ENCODE measurements at regions of chr20 and their contacts with region 1.

Region 1: DNA sequence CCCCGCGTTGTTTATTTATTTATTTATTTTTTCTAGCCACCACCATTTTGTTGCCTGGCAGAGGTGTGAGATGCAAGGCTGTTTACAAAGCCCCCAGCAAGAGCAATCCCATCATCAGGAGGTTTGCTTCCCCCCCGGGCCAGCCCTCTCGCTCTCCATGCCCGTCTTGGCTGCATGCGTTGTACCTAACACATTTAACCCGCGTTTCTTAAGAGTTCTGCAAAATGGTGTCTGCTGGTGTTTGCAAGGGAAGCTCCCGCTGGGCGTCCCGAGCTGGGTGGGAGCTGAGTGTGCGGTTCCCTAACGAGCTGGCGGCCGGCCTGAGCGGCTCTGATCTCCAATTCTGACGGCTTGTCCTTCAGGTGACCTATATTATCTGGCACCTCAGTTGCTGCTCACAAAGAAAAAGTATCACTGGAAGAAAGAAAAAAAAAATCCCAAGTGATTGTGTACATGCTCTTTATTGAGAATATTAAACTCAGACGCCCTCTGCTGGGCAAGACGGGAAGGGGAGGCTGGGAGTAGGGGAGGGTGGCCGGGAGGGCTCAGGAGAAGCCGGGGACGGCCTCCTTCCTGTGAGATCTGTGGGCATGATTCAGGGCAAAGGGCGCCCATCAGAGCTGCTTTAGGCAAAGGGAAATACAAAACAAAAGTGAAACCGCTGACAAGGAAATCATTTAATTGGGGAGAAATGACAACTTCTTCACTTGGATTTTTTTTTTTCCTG is 154.8 kb downstream of the BCAS1 start:
- DNase-seq: peak; percentile 92
- H3K4me3 ChIP-seq: peak overlapping the region; percentile 37 to 47
- H3K27ac ChIP-seq: peak overlapping the region; percentile 77 to 79
- H3K4me1 ChIP-seq: peaks cover 10% of the 10 kb centered on the region
- H3K27me3 ChIP-seq: no peaks in the 10 kb centered on the region
- CTCF ChIP-seq: peak; percentile 89 to 95 (median 92)
- POLR2A ChIP-seq: no peak

Region 2: DNA sequence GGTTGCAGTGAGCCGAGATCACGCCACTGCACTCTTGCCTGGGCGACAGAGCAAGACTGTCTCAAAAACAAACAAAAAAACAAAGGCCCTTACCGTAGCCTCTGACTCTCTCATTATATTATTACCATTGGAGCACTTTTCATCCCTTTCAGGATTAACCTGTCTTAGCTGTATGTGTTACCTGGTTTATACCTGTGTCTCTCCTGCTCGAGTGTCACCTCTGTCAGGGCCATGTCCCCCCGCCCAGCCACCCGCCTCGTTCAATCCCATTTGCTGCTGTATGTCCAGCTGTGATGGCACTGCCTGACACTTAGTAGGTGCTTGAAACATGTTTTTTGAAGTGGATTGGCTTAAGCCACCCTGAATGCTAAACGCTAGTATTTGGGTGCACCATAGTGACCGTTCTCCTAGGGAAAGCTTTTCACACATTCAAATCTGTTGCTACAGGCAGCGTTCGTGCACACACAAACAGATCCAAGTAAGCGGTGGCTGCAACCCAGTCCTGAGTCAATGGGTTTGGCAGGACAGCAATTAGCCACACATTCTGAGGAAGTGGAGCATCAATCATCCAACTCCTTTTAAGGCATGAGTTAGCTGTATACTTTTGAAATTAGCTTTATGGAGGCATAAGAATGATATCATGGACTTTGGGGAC is 223.1 kb before region 1 on chr20:
- intact Hi-C with region 1: no loop called
- DNase-seq: no peak
- H3K4me3 ChIP-seq: no peak overlapping the region
- H3K27ac ChIP-seq: no peak overlapping the region
- H3K4me1 ChIP-seq: no peaks in the 10 kb centered on the region
- H3K27me3 ChIP-seq: no peaks in the 10 kb centered on the region
- CTCF ChIP-seq: no peak
- POLR2A ChIP-seq: no peak

Region 3: GRCh38 chr20:53869466-53870258 is 45.9 kb before region 1 on chr20:
- intact Hi-C with region 1: loop called (anchors 5 kb)
- DNase-seq: peak; percentile 87
- H3K4me3 ChIP-seq: no peak overlapping the region
- H3K27ac ChIP-seq: peak overlapping the region; percentile 65 to 78
- H3K4me1 ChIP-seq: peaks cover 16% of the 10 kb centered on the region
- H3K27me3 ChIP-seq: no peaks in the 10 kb centered on the region
- CTCF ChIP-seq: peak; percentile 60 to 92 (median 86)
- POLR2A ChIP-seq: no peak

Measured in prostate gland (tissue), 2 donors.